HAP-1 (cell line): ENCODE measurements at regions of chr11 and their contacts with region 1.

Region 1: GRCh38 chr11:106706355-106706754 is 311.9 kb downstream of the GUCY1A2 start:
- DNase-seq: no peak
- H3K4me3 ChIP-seq: no peak overlapping the region
- H3K4me1 ChIP-seq: no peaks in the 10 kb centered on the region
- H3K27me3 ChIP-seq: no peaks in the 10 kb centered on the region

Region 2: DNA sequence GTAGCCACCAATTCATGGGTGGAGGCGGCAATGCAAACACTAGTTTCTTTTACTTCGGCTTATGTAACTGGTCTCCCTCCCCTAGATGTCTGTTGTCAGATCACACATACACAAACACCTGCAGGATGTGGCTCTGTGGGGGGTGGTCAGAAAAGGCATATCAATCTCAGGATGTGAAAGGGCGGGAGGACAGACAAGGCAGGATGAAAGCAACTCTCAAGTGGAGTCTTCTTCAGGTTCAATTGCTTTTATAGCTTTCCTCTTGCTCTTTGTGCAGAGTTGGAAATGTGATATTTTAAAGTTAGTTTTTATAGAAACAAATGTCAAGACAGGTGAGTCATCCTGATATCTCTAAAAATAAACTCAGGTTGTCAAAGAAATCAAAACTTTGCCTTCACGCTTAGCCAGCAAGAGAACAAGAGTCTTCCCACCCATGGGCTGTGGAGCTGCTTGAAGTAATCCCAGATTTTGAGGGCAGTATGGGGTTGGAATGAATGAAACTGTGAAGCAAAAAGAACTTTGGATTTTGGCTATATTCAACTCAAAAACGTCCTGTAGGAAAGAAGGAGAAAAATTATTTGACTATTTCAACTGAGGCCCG is 111.5 kb before region 1 on chr11:
- in situ Hi-C with region 1: no loop called
- DNase-seq: no peak
- H3K4me3 ChIP-seq: no peak overlapping the region
- H3K4me1 ChIP-seq: no peaks in the 10 kb centered on the region
- H3K27me3 ChIP-seq: no peaks in the 10 kb centered on the region

Region 3: DNA sequence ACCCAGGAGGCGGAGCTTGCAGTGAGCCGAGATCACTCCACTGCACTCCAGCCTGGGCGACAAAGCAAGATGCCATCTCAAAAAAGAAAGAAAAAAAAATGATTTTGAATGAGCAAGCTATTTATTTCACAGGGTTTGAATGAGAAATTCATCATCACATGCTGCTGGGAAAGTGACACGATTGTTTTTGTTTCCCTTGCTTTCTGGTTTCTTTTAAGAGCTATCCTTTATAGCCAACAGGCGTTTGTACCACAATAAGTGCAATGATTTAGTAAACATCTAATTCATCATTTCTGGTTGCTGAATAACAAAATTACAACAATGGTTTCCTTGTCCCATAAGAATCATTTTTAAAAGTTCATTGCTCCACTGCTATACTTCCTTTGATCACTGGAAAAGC is 182.0 kb after region 1 on chr11:
- in situ Hi-C with region 1: no loop called
- DNase-seq: no peak
- H3K4me3 ChIP-seq: no peak overlapping the region
- H3K4me1 ChIP-seq: no peaks in the 10 kb centered on the region
- H3K27me3 ChIP-seq: no peaks in the 10 kb centered on the region; the same call in 1 of the 2 replicates

Region 4: GRCh38 chr11:107017433-107018227 is 311.3 kb after region 1 on chr11:
- in situ Hi-C with region 1: loop called (anchors 25 kb)
- DNase-seq: peak; percentile 28 to 65
- H3K4me3 ChIP-seq: peak overlapping the region; percentile 26
- H3K4me1 ChIP-seq: no peaks in the 10 kb centered on the region
- H3K27me3 ChIP-seq: peaks cover 16% of the 10 kb centered on the region